HAP-1 (cell line): ENCODE measurements at regions of chr9 and their contacts with region 1.

Region 1: GRCh38 chr9:87324613-87325194 is 173.0 kb upstream of the DAPK1 start:
- DNase-seq: peak in 1 of 2 experiments; percentile 56
- H3K4me3 ChIP-seq: no peak overlapping the region
- H3K4me1 ChIP-seq: no peaks in the 10 kb centered on the region
- H3K27me3 ChIP-seq: no peaks in the 10 kb centered on the region

Region 2: GRCh38 chr9:86413966-86414880 is 910.5 kb before region 1 on chr9:
- in situ Hi-C with region 1: loop called (anchors 10 kb)
- DNase-seq: peak in 1 of 2 experiments; percentile 31
- H3K4me3 ChIP-seq: no peak overlapping the region
- H3K4me1 ChIP-seq: peaks cover 5% of the 10 kb centered on the region
- H3K27me3 ChIP-seq: peaks cover 4% of the 10 kb centered on the region

Region 3: DNA sequence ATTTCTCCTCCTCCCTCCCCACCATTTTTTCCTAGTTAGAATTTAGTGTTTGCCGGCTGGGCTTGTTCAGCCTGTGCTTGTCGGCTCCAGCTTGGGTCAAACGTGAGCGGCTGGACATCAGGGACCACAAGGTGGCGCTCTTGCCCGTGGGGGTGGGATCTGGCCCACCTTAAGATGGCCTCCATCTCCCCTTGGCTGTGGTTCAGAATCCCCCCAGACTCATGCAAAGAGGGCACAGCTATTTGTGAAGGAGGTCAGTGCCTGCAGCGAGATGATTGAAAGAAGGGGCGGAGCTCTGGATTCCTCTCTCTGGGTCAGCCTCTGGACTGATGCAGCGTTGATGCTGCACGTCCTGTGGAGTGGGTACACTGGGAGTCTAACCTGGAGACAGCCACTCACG is 687.2 kb before region 1 on chr9:
- in situ Hi-C with region 1: loop called (anchors 25 kb)
- DNase-seq: peak in 1 of 2 experiments; percentile 69
- H3K4me3 ChIP-seq: no peak overlapping the region
- H3K4me1 ChIP-seq: no peaks in the 10 kb centered on the region
- H3K27me3 ChIP-seq: peaks cover 6% of the 10 kb centered on the region

Region 4: GRCh38 chr9:87375397-87376073 is 50.8 kb after region 1 on chr9:
- in situ Hi-C with region 1: no loop called
- DNase-seq: no peak
- H3K4me3 ChIP-seq: no peak overlapping the region
- H3K4me1 ChIP-seq: no peaks in the 10 kb centered on the region
- H3K27me3 ChIP-seq: no peaks in the 10 kb centered on the region